Upper lobe of right lung (tissue), 1 donor: ENCODE measurements at regions of chr11 and their contacts with region 1.

Region 1: GRCh38 chr11:17384002-17384511 is 4.4 kb downstream of the KCNJ11 start:
- DNase-seq: peak; percentile 89
- ATAC-seq: peak; percentile 68
- H3K4me3 ChIP-seq: no peak overlapping the region
- H3K27ac ChIP-seq: no peak overlapping the region
- H3K4me1 ChIP-seq: peaks cover 3% of the 10 kb centered on the region
- H3K27me3 ChIP-seq: peaks cover 10% of the 10 kb centered on the region
- CTCF ChIP-seq: peak; percentile 93

Region 2: DNA sequence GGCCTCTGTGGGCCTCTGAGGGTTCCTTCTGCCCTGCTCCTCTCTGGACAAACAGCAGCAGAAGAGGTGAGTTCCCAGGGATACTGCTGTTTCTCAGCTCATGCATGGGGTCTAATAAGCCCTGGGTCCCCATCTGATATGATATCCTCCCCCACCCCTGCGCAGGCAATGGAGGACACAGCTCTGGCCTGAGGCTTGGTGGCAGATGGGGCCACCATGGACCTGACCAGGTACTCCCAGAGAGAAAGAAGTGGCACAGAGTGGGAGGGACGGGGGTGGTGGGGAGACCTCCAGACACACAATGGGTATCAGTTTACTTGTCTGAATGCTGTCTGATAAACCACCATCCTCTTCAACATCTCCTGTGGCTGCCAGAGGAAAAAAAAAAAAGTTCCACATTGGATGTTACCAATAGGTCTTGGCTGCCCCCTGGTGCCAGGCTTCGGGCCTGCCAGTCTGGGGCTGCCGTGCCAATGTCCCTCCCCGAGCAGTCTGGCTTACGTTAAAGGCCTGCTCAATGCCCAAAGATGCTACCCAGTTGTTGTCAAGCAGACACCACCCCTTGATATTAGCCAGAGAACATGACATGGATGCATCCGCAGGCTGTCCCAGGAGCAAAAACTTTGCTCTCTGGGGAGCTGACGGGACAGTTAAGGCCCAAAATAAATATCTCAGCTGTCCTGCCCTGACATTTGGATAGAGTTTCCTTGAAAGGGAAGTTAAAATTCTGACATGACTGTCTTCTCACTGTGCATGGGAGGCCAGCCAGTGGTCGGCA is 120.5 kb after region 1 on chr11:
- intact Hi-C with region 1: loop called (anchors 2 kb)
- DNase-seq: peak; percentile 88
- ATAC-seq: peak; percentile 83
- H3K4me3 ChIP-seq: no peak overlapping the region
- H3K27ac ChIP-seq: no peak overlapping the region
- H3K4me1 ChIP-seq: no peaks in the 10 kb centered on the region
- H3K27me3 ChIP-seq: no peaks in the 10 kb centered on the region
- CTCF ChIP-seq: peak; percentile 93